ENCODE measurements at regions of chr3 and their contacts with region 1.

Region 1: GRCh38 chr3:47688488-47688887 is 93.2 kb downstream of the SMARCC1 start:
- DNase-seq: no peak
- ATAC-seq: no peak
- H3K4me3 Mint-ChIP-seq: no peak overlapping the region
- H3K27ac Mint-ChIP-seq: no peak overlapping the region
- H3K4me1 Mint-ChIP-seq: peaks cover 6% of the 10 kb centered on the region
- H3K27me3 Mint-ChIP-seq: no peaks in the 10 kb centered on the region

Region 2: DNA sequence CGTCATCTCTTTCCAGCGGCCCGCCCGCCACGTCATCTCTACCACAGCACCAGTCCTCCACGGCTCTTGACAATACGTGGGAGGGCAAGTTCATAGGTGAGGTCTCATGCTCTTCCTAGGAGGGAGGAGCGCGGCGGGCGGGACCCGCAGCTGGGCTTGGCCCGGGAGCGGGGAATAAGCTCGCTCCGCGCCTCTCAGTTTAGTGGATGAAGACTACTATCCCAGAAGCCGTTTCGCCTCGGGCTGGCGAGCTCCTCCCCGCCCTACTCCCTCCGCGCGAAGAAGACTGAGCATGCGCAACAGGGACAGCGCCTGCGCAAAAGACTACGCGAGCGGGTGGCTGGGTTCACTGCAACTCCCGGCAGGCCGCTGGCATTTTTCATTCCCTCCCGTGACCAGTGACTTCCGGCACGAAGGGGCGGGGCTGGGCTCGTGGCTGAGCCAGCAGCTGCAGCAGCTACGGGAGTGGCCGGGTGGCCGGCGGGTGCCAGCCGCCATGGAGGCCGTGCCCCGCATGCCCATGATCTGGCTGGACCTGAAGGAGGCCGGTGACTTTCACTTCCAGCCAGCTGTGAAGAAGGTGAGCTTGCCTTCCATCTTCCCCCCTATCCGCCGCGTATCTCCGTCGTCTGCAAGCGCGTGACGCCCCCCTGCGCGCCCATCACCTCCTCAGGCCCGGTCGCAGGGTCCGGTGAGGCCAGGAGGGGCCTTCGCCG is 307.7 kb before region 1 on chr3 and contains the start of gene PTPN23:
- CTCF ChIA-PET with region 1: no interaction called
- POLR2A ChIA-PET with region 1: no interaction called
- intact Hi-C with region 1: no loop called
- DNase-seq: peak; percentile 99
- ATAC-seq: peak; percentile 81
- H3K4me3 Mint-ChIP-seq: peak within 1 kb of the TSS; percentile 86
- H3K27ac Mint-ChIP-seq: peak within 1 kb of the TSS; percentile 99
- H3K4me1 Mint-ChIP-seq: peaks cover 39% of the 10 kb centered on the region
- H3K27me3 Mint-ChIP-seq: no peaks in the 10 kb centered on the region
- total RNA-seq, gene PTPN23: 25.9 to 29.4 TPM

Region 3: GRCh38 chr3:47669026-47669749 is 19.3 kb before region 1 on chr3:
- CTCF ChIA-PET with region 1: interaction called, 4 read pairs
- POLR2A ChIA-PET with region 1: interaction called, 10 read pairs
- intact Hi-C with region 1: no loop called
- DNase-seq: no peak
- ATAC-seq: no peak
- H3K4me3 Mint-ChIP-seq: no peak overlapping the region
- H3K27ac Mint-ChIP-seq: peak overlapping the region; percentile 52
- H3K4me1 Mint-ChIP-seq: peaks cover 2% of the 10 kb centered on the region
- H3K27me3 Mint-ChIP-seq: no peaks in the 10 kb centered on the region

Measured in activated CD4-positive, alpha-beta T cell treated with anti-CD3 and anti-CD28 coated beads for 36 hours (primary cell).